ENCODE measurements at regions of chr16 and their contacts with region 1.

Region 1: GRCh38 chr16:6016530-6017184 is 919.1 kb upstream of the EEF2KMT start:
- DNase-seq: peak; percentile 8
- H3K4me3 ChIP-seq: no peak overlapping the region
- H3K27ac ChIP-seq: no peak overlapping the region
- H3K4me1 ChIP-seq: no peaks in the 10 kb centered on the region
- CTCF ChIP-seq: peak; percentile 69

Region 2: DNA sequence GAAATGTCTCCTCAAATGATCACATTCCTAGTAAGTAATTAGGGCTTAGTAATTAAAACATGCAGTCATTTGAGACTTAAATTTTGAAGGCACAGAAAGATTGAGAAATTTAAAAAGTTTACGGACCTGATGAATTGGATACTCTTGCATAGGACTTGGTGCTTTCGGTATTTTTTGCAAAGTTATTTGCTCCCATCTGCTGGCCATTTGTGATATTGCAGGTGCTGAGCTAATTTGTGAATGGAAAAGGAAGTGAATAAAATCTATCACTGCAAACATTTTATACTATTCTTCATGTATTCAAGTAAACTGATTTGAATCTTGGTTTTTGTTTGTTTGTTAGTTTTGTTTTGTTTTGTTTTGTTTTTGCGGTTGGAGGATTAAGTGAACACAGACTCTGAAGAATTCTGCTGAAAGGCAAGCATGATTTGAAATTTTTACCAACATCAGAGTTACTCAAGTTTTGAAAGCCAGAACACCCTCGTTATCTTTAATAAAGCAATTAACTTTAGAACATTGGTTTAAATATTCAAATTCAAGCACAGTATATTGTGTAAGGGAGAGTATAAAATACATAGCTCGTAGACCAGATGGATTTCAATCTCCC is 626.5 kb after region 1 on chr16:
- CTCF ChIA-PET with region 1: no interaction called
- POLR2A ChIA-PET with region 1: no interaction called
- intact Hi-C with region 1: loop called (anchors 2 kb)
- DNase-seq: peak; percentile 47
- H3K4me3 ChIP-seq: no peak overlapping the region
- H3K27ac ChIP-seq: no peak overlapping the region
- H3K4me1 ChIP-seq: no peaks in the 10 kb centered on the region
- CTCF ChIP-seq: peak; percentile 95

Measured in OCI-LY7 (cell line).